ENCODE measurements at regions of chr6 and their contacts with region 1.

Region 1: DNA sequence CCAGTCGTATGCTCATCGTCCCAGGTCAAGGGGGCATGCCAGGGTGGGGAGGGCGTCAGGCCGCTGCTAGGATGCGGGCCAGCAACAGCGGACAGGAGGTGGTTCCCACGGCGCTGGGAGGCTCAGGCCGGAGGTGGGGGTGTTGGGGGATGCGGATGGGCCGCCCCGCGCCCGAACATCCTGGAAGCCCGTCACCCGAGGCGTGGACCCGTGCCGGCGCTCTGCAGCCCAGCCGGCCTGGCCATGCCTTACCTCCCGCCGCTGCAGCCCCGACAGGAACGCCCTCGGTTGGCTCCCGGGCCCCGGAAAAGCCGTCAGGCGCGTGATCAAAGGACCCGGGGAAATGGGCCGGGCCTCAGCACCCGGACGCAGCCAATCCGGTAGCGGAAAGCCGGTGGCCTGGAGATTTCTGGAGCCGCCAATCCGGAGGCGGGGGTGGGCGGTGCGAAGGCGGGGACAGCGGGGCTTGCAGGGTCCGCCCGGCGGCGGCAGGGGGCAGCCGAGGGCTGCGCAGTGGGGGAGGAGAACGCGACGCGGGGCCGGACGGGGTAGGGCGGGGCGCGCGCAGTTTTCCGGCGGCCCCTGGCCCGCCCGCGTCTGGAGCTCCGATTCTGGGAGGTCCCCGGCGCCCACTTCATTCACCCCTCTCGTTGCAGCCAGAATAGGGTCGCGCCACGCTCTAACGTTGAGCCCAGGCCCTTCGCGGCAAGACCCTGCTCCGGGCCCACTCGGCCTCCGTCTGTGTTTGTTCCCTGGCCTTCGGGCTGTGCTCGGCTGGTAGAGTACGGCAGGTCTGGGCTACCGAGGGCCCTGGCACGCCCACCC is at the start of gene SMIM29:
- DNase-seq: peak; percentile 97
- ATAC-seq: peak; percentile 92
- H3K4me3 Mint-ChIP-seq: peak within 1 kb of the TSS; percentile 96
- H3K27ac Mint-ChIP-seq: peak within 1 kb of the TSS; percentile 92
- H3K4me1 Mint-ChIP-seq: peaks cover 53% of the 10 kb centered on the region
- H3K27me3 Mint-ChIP-seq: peaks cover 11% of the 10 kb centered on the region
- total RNA-seq, gene SMIM29: 21.3 to 26.7 TPM

Region 2: DNA sequence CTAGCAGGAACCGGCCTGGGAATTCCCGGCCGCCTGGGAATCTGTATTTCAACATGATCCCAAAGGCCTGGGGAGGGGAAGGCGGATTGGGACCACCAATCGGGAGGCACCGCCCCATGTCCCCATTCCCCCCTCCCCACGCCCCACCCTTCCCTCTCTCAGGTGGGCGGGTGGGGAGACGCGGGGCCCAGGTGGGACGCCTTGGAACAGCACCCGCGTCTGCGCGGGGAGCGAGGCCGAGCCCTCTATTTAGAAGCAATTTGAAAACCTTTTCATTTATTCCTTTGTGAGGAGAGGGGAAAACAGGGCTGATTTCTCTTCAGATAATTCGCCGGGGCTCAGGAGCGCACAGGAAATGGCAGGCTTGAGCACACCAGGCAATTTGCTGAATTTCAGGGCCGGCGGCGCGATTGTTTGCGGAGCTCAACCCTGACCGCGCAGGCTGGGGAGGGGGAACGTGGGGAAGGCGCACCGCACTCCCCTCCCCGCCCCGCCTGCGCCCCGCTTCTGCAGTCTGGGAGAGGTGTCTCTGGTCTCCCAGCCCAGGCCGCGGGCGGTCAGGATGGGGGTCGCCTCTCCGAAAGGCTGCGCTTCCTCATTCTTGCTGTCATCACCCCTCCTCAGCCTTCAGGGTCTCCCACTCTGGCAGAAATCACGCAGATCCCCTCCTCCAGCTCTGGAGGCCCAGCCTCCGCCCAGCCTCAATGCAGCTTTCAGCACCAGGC is 273.1 kb before region 1 on chr6:
- CTCF ChIA-PET with region 1: no interaction called
- POLR2A ChIA-PET with region 1: no interaction called
- DNase-seq: no peak
- ATAC-seq: no peak
- H3K4me3 Mint-ChIP-seq: no peak overlapping the region
- H3K27ac Mint-ChIP-seq: no peak overlapping the region
- H3K4me1 Mint-ChIP-seq: no peaks in the 10 kb centered on the region
- H3K27me3 Mint-ChIP-seq: peaks cover 45% of the 10 kb centered on the region

Region 3: GRCh38 chr6:34196126-34196830 is 52.7 kb before region 1 on chr6:
- CTCF ChIA-PET with region 1: interaction called, 16 read pairs
- POLR2A ChIA-PET with region 1: interaction called, 9 read pairs
- DNase-seq: peak; percentile 89
- ATAC-seq: peak; percentile 99
- H3K4me3 Mint-ChIP-seq: peak overlapping the region; percentile 75
- H3K27ac Mint-ChIP-seq: peak overlapping the region; percentile 39
- H3K4me1 Mint-ChIP-seq: peaks cover 7% of the 10 kb centered on the region
- H3K27me3 Mint-ChIP-seq: peaks cover 13% of the 10 kb centered on the region

Region 4: DNA sequence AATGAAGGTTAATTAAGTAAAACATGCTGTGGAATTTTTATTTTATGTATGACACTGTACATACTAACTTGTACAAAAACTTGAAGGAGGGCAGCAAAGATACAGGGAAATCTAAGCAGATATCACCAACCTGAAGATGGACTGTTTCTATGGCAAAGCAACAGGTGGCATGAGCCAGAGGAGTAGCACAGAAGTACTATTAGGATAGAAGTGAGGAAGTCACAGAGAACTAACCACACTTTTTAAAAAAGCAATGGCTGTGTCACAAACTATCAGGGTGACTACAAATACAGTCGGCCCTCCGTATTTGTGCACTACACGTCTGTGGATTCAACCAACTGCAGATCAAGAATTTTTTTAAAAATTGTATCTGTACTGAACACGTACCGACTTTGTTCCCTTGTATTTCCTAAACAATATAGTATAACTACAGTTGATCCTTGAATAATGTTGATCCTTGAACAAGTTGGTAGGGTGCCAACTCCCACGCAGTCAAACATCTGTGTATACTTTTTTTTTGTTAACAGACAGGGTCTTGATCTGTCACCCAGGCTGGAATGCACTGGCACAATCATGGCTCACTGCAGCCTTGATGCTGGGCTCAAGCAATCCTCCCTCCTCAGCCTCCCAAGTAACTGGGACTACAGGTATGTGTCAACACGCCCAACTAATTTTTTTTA is 82.6 kb after region 1 on chr6:
- CTCF ChIA-PET with region 1: no interaction called
- POLR2A ChIA-PET with region 1: no interaction called
- DNase-seq: no peak
- ATAC-seq: no peak
- H3K4me3 Mint-ChIP-seq: no peak overlapping the region
- H3K27ac Mint-ChIP-seq: no peak overlapping the region
- H3K4me1 Mint-ChIP-seq: peaks cover 4% of the 10 kb centered on the region
- H3K27me3 Mint-ChIP-seq: no peaks in the 10 kb centered on the region

Region 5: GRCh38 chr6:34392497-34393190 is 143.7 kb after region 1 on chr6 and contains the start of gene NUDT3:
- CTCF ChIA-PET with region 1: interaction called, 46 read pairs
- POLR2A ChIA-PET with region 1: no interaction called
- DNase-seq: peak; percentile 96
- ATAC-seq: peak; percentile 96
- H3K4me3 Mint-ChIP-seq: peak within 1 kb of the TSS; percentile 58
- H3K27ac Mint-ChIP-seq: peak within 1 kb of the TSS; percentile 89
- H3K4me1 Mint-ChIP-seq: peaks cover 12% of the 10 kb centered on the region
- H3K27me3 Mint-ChIP-seq: no peaks in the 10 kb centered on the region
- total RNA-seq, gene NUDT3: 13.1 to 13.8 TPM

Region 6: DNA sequence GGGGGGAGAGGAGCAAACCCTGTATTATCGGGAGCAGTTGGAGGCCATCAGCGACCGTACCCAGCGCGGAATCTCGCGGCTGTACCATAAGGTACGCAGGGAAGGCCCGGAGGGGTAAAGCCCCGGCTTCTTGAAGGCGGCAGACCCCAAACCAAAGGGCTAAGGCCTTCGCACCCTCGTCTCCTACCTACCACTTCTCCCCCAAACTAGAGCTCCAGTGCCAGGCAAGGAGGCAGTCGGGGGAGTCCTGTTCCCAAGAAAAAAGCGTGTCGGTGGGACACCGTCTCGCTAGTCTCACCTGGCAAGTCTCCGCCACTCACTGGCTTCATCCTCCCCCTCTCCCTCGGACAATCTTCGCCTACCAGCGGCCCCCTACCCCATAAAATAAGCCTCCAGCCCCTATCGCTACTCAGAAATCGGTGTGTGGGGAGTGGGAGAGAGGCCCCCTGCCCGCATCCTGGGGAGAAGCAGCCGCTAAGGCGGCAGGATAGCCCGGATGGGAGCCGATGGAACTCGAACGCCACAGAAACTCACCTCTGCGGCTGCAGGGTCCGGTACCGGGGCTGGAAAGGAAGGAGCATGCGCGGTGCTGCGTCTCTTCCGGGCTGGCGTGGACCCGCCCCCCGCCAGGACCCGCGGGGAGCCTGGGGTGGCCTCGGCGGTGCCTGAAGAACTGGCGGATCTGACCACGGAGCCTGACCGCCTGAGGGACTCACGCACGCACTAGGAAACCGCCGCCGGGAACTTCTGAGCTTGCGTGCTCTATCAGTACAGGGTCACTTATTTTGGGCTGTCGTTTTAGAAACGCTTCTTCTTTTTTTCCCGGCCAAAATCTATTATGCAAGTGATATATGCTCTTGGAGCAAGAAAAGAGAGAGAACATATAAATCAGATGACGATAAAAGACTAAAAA is 176.8 kb after region 1 on chr6 and contains the start of gene RPS10:
- CTCF ChIA-PET with region 1: interaction called, 39 read pairs
- POLR2A ChIA-PET with region 1: interaction called, 4 read pairs
- DNase-seq: peak; percentile 91
- ATAC-seq: peak; percentile 95
- H3K4me3 Mint-ChIP-seq: peak within 1 kb of the TSS; percentile 99
- H3K27ac Mint-ChIP-seq: peak within 1 kb of the TSS; percentile 98
- H3K4me1 Mint-ChIP-seq: peaks cover 35% of the 10 kb centered on the region
- H3K27me3 Mint-ChIP-seq: peaks cover 8% of the 10 kb centered on the region
- total RNA-seq, gene RPS10: 1,272 to 1,289 TPM

Region 7: DNA sequence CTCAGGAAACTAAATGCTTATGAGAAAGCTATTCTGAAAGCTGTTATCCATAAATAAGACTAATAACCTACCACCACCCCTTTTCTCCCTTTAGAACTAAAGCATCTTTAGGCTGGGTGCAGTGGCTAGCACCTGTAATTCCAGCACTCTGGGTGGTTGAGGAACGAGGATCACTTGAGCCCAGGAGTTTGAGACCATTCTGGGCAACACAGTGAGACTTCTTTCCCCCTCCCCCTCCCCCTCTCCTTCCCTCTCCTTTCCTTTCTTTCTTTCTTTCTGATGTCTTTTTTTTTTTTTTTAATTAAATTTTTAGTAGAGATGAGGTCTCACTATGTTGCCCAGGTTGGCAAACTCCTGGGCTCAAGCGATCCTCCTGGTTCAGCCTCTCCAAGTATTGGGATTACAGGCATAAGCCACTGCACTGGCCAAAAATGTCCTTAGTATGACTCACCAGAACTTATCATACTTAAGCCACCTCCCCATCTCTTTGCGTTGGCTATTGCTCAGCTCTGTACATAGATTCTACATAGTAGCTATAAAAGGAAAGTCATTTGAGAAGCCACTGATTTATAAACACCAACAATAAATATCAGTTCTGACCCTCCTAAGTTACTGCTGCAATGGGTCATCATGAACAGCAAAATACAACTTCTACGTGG is 362.0 kb after region 1 on chr6:
- CTCF ChIA-PET with region 1: interaction called, 22 read pairs
- POLR2A ChIA-PET with region 1: no interaction called
- DNase-seq: no peak
- ATAC-seq: no peak
- H3K4me3 Mint-ChIP-seq: no peak overlapping the region
- H3K27ac Mint-ChIP-seq: no peak overlapping the region
- H3K4me1 Mint-ChIP-seq: peaks cover 14% of the 10 kb centered on the region
- H3K27me3 Mint-ChIP-seq: no peaks in the 10 kb centered on the region